Activated CD8-positive, alpha-beta T cell treated with anti-CD3 and anti-CD28 coated beads for 36 hours (primary cell): ENCODE measurements at regions of chr1 and their contacts with region 1.

Region 1: GRCh38 chr1:167059045-167059808 is 30.9 kb downstream of the GPA33 start:
- DNase-seq: peak; percentile 85
- ATAC-seq: peak; percentile 70
- H3K4me3 Mint-ChIP-seq: peak overlapping the region; percentile 12
- H3K27ac Mint-ChIP-seq: peak overlapping the region; percentile 66
- H3K4me1 Mint-ChIP-seq: peaks cover 7% of the 10 kb centered on the region
- H3K27me3 Mint-ChIP-seq: no peaks in the 10 kb centered on the region
- CTCF ChIP-seq: peak; percentile 98

Region 2: GRCh38 chr1:166884040-166884642 is 175.1 kb before region 1 on chr1:
- CTCF ChIA-PET with region 1: interaction called, 89 read pairs
- POLR2A ChIA-PET with region 1: no interaction called
- intact Hi-C with region 1: no loop called
- DNase-seq: peak; percentile 58
- ATAC-seq: peak; percentile 79
- H3K4me3 Mint-ChIP-seq: no peak overlapping the region
- H3K27ac Mint-ChIP-seq: no peak overlapping the region
- H3K4me1 Mint-ChIP-seq: peaks cover 11% of the 10 kb centered on the region
- H3K27me3 Mint-ChIP-seq: peaks cover 24% of the 10 kb centered on the region
- CTCF ChIP-seq: peak; percentile 75

Region 3: GRCh38 chr1:166920561-166921475 is 138.4 kb before region 1 on chr1:
- CTCF ChIA-PET with region 1: interaction called, 863 read pairs
- POLR2A ChIA-PET with region 1: no interaction called
- intact Hi-C with region 1: no loop called
- DNase-seq: peak; percentile 12
- ATAC-seq: peak; percentile 27
- H3K4me3 Mint-ChIP-seq: peak overlapping the region; percentile 28
- H3K27ac Mint-ChIP-seq: no peak overlapping the region
- H3K4me1 Mint-ChIP-seq: peaks cover 2% of the 10 kb centered on the region
- H3K27me3 Mint-ChIP-seq: peaks cover 36% of the 10 kb centered on the region
- CTCF ChIP-seq: no peak

Region 4: DNA sequence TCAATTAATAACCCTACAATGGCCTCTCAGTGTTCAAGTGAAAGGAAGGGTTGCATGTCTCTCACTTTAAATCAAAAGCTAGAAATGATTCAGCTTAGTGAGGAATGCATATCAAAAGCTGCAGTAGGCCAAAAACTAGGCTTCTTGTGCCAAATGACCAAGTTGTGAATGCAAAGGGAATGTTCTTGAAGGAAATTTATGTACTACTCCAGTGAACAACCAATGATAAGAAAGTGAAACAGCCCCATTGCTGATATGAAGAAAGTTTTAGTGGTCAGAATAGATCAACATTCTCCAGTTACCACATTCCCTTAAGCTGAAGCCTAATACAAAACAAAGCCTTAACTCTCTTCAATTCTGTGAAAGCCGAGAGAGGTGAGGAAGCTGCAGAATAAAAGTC is 60.1 kb before region 1 on chr1:
- CTCF ChIA-PET with region 1: interaction called, 10 read pairs
- POLR2A ChIA-PET with region 1: no interaction called
- intact Hi-C with region 1: no loop called
- DNase-seq: no peak
- ATAC-seq: peak; percentile 20
- H3K4me3 Mint-ChIP-seq: no peak overlapping the region
- H3K27ac Mint-ChIP-seq: no peak overlapping the region
- H3K4me1 Mint-ChIP-seq: peaks cover 8% of the 10 kb centered on the region
- H3K27me3 Mint-ChIP-seq: peaks cover 13% of the 10 kb centered on the region
- CTCF ChIP-seq: no peak

Region 5: DNA sequence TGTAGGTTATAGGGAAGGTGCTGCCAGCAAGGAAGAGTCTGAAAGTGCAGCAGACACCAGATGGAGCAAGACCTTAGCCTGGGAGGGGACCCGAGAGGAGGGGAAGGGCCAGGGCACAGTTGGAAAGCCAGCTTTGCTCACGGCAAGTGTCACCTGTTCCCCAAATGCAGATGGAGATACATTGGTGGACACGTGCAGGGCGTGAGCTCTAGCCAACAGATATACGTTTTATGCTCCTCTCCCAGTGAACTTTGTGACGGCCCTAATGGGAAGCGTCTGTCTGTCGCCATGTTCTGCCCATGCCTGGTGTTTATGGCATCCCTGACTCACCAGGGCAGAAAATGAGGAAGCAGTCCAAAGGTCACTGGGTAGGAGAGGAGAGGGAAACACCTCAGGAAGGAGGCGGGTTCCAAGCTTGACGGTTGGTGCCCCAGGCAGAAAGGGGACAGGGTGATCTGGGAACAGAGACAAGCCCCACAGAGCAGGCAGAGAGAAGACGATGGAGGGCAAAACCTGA is 23.3 kb after region 1 on chr1:
- CTCF ChIA-PET with region 1: interaction called, 16 read pairs
- POLR2A ChIA-PET with region 1: no interaction called
- intact Hi-C with region 1: no loop called
- DNase-seq: no peak
- ATAC-seq: no peak
- H3K4me3 Mint-ChIP-seq: no peak overlapping the region
- H3K27ac Mint-ChIP-seq: no peak overlapping the region
- H3K4me1 Mint-ChIP-seq: peaks cover 8% of the 10 kb centered on the region
- H3K27me3 Mint-ChIP-seq: no peaks in the 10 kb centered on the region
- CTCF ChIP-seq: no peak

Region 6: DNA sequence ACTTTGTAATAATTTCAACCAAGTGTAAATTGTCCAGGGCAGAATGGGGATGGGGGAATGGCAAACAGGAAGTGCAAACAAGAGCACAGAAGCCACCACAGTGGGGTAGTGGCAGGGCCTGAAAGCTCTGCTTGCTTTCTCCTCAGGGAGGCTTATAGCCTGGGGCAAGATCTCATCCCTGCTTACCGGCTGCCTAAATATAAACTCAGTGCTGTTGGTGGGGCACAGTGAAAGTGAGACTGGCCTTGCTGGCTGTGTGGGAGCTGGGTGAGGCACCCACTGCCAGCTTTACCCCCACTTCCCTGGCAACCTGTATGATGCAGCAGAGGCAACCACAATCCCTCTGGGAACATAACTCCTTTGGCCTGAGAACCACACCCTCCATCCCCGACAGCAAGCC is 49.9 kb after region 1 on chr1:
- CTCF ChIA-PET with region 1: interaction called, 14 read pairs
- POLR2A ChIA-PET with region 1: no interaction called
- intact Hi-C with region 1: no loop called
- DNase-seq: no peak
- ATAC-seq: no peak
- H3K4me3 Mint-ChIP-seq: no peak overlapping the region
- H3K27ac Mint-ChIP-seq: peak overlapping the region; percentile 44
- H3K4me1 Mint-ChIP-seq: peaks cover 39% of the 10 kb centered on the region
- H3K27me3 Mint-ChIP-seq: no peaks in the 10 kb centered on the region
- CTCF ChIP-seq: no peak

Region 7: DNA sequence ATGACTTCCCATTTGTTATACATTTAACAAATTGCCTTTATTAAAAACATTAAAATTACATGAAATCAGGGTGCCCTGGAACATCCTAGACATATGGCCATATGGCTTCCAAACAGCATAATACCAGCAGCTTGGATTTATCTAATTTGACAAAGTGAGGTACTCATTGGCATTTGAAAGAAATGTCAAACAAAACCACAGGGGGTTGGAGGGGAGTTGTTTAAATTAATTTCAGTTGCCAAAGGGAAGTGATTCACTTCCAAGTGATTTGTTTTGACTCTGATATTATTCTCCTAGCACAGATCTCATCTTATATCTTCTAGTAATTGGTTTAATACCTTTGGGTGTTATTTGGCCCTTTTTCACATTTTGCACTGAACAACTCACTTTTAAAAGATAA is 136.9 kb after region 1 on chr1:
- CTCF ChIA-PET with region 1: no interaction called
- POLR2A ChIA-PET with region 1: no interaction called
- intact Hi-C with region 1: no loop called
- DNase-seq: no peak
- ATAC-seq: peak; percentile 54
- H3K4me3 Mint-ChIP-seq: no peak overlapping the region
- H3K27ac Mint-ChIP-seq: no peak overlapping the region
- H3K4me1 Mint-ChIP-seq: peaks cover 6% of the 10 kb centered on the region
- H3K27me3 Mint-ChIP-seq: peaks cover 2% of the 10 kb centered on the region
- CTCF ChIP-seq: no peak

Region 8: GRCh38 chr1:167387251-167387910 is 328.2 kb after region 1 on chr1:
- CTCF ChIA-PET with region 1: no interaction called
- POLR2A ChIA-PET with region 1: no interaction called
- intact Hi-C with region 1: no loop called
- DNase-seq: no peak
- ATAC-seq: no peak
- H3K4me3 Mint-ChIP-seq: no peak overlapping the region
- H3K27ac Mint-ChIP-seq: no peak overlapping the region
- H3K4me1 Mint-ChIP-seq: no peaks in the 10 kb centered on the region
- H3K27me3 Mint-ChIP-seq: no peaks in the 10 kb centered on the region
- CTCF ChIP-seq: no peak